ENCODE measurements at regions of chr20 and their contacts with region 1.

Region 1: GRCh38 chr20:43537921-43538877 is 20.6 kb upstream of the SGK2 start:
- DNase-seq: peak; percentile 83 to 88
- H3K4me3 ChIP-seq: no peak overlapping the region
- H3K4me3 Mint-ChIP-seq: no peak overlapping the region
- H3K27ac Mint-ChIP-seq: no peak overlapping the region
- H3K4me1 ChIP-seq: peaks cover 5% of the 10 kb centered on the region; the same call in 1 of the 2 replicates
- H3K4me1 Mint-ChIP-seq: no peaks in the 10 kb centered on the region
- H3K27me3 ChIP-seq: no peaks in the 10 kb centered on the region
- H3K27me3 Mint-ChIP-seq: no peaks in the 10 kb centered on the region
- CTCF ChIP-seq: peak; percentile 99

Region 2: GRCh38 chr20:43322851-43323250 is 215.3 kb before region 1 on chr20:
- CTCF ChIA-PET with region 1: no interaction called
- POLR2A ChIA-PET with region 1: no interaction called
- intact Hi-C with region 1: no loop called
- DNase-seq: no peak
- H3K4me3 ChIP-seq: no peak overlapping the region
- H3K4me3 Mint-ChIP-seq: no peak overlapping the region
- H3K27ac Mint-ChIP-seq: no peak overlapping the region
- H3K4me1 ChIP-seq: no peaks in the 10 kb centered on the region
- H3K4me1 Mint-ChIP-seq: no peaks in the 10 kb centered on the region
- H3K27me3 ChIP-seq: no peaks in the 10 kb centered on the region
- H3K27me3 Mint-ChIP-seq: peaks cover 16% of the 10 kb centered on the region
- CTCF ChIP-seq: no peak

Region 3: GRCh38 chr20:43549416-43550065 is 11.3 kb after region 1 on chr20:
- CTCF ChIA-PET with region 1: interaction called, 21 read pairs
- POLR2A ChIA-PET with region 1: no interaction called
- intact Hi-C with region 1: no loop called
- DNase-seq: peak in 1 of 2 experiments; percentile 38
- H3K4me3 ChIP-seq: no peak overlapping the region
- H3K4me3 Mint-ChIP-seq: no peak overlapping the region
- H3K27ac Mint-ChIP-seq: no peak overlapping the region
- H3K4me1 ChIP-seq: no peaks in the 10 kb centered on the region
- H3K4me1 Mint-ChIP-seq: no peaks in the 10 kb centered on the region
- H3K27me3 ChIP-seq: no peaks in the 10 kb centered on the region
- H3K27me3 Mint-ChIP-seq: no peaks in the 10 kb centered on the region
- CTCF ChIP-seq: no peak

Region 4: GRCh38 chr20:43583982-43584432 is 45.8 kb after region 1 on chr20:
- CTCF ChIA-PET with region 1: interaction called, 29 read pairs
- POLR2A ChIA-PET with region 1: no interaction called
- intact Hi-C with region 1: no loop called
- DNase-seq: no peak
- H3K4me3 ChIP-seq: no peak overlapping the region
- H3K4me3 Mint-ChIP-seq: no peak overlapping the region
- H3K27ac Mint-ChIP-seq: no peak overlapping the region
- H3K4me1 ChIP-seq: peaks cover 14% of the 10 kb centered on the region
- H3K4me1 Mint-ChIP-seq: no peaks in the 10 kb centered on the region
- H3K27me3 ChIP-seq: no peaks in the 10 kb centered on the region
- H3K27me3 Mint-ChIP-seq: no peaks in the 10 kb centered on the region
- CTCF ChIP-seq: no peak

Region 5: DNA sequence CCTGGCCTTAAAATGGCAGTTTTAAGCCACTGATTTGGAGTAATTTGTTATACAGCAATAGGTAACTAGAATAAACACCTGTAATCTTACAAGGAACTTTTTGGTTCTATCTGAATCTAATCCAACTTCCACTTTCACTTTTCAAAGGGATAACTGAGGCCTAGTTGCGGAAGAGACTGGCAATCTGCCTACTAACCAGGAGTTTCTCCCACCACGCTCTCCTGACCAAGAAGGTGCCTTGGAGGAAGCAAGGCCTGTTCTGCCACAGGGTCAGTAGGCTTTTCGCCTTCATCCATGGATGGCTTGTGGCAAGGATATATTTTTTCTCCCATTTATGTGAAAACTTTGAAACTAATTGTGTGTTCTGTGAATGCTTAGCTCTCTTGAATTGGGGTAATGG is 115.8 kb after region 1 on chr20:
- CTCF ChIA-PET with region 1: interaction called, 7 read pairs
- POLR2A ChIA-PET with region 1: no interaction called
- intact Hi-C with region 1: loop called (anchors 1 kb)
- DNase-seq: no peak
- H3K4me3 ChIP-seq: no peak overlapping the region
- H3K4me3 Mint-ChIP-seq: no peak overlapping the region
- H3K27ac Mint-ChIP-seq: no peak overlapping the region
- H3K4me1 ChIP-seq: peaks cover 31% of the 10 kb centered on the region
- H3K4me1 Mint-ChIP-seq: no peaks in the 10 kb centered on the region
- H3K27me3 ChIP-seq: no peaks in the 10 kb centered on the region
- H3K27me3 Mint-ChIP-seq: no peaks in the 10 kb centered on the region
- CTCF ChIP-seq: no peak

Region 6: DNA sequence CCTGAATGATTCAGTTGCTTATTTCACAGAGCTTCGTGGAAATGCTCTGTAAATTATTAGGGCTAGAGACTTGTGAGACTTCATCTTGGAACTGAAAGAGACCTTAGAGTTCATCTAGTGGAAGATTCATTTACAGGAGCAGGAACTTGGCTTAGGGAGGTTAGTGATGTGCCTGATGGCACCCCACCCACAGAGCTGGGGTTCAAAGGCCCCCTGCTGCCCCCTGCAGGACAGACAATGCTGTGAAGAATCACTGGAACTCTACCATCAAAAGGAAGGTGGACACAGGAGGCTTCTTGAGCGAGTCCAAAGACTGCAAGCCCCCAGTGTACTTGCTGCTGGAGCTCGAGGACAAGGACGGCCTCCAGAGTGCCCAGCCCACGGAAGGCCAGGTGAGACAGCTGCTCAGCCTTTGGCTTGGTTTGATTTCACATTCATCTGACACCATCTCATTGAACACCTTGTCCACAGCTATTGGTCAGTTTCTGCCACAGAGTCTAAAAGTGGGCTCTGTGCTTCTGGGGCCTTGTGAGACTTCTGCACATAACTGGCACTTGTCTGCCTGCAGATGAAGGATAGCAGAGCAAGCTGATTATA is 153.8 kb after region 1 on chr20:
- CTCF ChIA-PET with region 1: interaction called, 81 read pairs
- POLR2A ChIA-PET with region 1: no interaction called
- intact Hi-C with region 1: loop called (anchors 1 kb)
- DNase-seq: peak; percentile 80 to 88
- H3K4me3 ChIP-seq: no peak overlapping the region
- H3K4me3 Mint-ChIP-seq: no peak overlapping the region
- H3K27ac Mint-ChIP-seq: no peak overlapping the region
- H3K4me1 ChIP-seq: no peaks in the 10 kb centered on the region
- H3K4me1 Mint-ChIP-seq: peaks cover 4% of the 10 kb centered on the region
- H3K27me3 ChIP-seq: no peaks in the 10 kb centered on the region
- H3K27me3 Mint-ChIP-seq: no peaks in the 10 kb centered on the region
- CTCF ChIP-seq: peak; percentile 95

Measured in Caco-2 (cell line).